IMR-90 (cell line): ENCODE measurements at regions of chr12 and their contacts with region 1.

Region 1: DNA sequence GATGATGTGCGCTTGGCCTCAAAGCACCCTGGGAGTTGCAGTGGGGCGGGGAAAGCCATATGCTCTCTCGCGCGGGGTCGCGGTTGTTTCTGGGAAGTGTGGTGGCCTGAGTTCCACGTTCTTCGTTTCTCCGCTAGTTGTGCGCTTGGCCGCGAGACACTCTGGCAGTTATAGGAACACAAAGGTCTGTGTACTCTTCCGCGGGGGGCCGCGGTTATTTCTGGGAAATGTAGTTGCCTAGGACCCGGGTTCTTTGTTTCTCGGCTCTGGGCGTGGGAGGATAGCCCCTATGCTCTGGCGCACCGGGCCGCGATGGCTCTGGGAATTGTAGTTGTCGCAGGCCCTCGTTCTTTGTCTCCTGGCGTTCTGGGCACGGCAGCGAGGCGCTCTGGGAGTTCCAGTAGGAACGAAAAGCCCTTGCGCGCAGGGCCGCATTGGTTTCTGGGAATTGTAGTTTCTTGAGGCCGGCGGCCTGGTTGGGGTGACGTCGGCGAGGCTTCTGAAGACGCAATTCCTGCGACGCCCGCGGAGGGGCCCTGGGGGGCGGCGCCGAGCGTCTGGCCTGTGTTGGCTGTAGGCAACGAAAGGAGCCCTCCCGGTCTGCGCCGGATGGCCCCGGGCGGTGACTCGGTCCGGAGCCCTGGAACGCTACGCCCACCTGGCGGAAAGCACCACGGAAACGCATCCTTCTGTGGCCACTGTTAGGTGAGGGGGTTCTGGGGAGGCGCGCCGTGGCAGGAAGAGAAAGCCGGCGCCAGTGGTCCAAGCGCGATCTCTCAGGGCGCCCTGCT is at the start of gene ZNF140:
- DNase-seq: peak; percentile 96
- ATAC-seq: peak; percentile 82
- H3K4me3 ChIP-seq: peak within 1 kb of the TSS; percentile 90
- H3K27ac ChIP-seq: peak within 1 kb of the TSS; percentile 86
- H3K4me1 ChIP-seq: no peaks in the 10 kb centered on the region; the same call in 1 of the 2 replicates
- H3K27me3 ChIP-seq: no peaks in the 10 kb centered on the region
- CTCF ChIP-seq: peak; percentile 26; the same call in 1 of the 2 replicates
- POLR2A ChIP-seq: peak; percentile 82
- RAD21 ChIP-seq: peak; percentile 25
- total RNA-seq, gene ZNF140: 20.8 and 25.8 TPM in 2 replicates

Region 2: GRCh38 chr12:132407451-132407961 is 673.1 kb before region 1 on chr12:
- CTCF ChIA-PET with region 1: no interaction called
- POLR2A ChIA-PET with region 1: no interaction called
- dilution Hi-C with region 1: no loop called
- in situ Hi-C with region 1: no loop called
- intact Hi-C with region 1: no loop called
- DNase-seq: no peak
- ATAC-seq: no peak
- H3K4me3 ChIP-seq: no peak overlapping the region
- H3K27ac ChIP-seq: no peak overlapping the region
- H3K4me1 ChIP-seq: no peaks in the 10 kb centered on the region
- H3K27me3 ChIP-seq: peaks cover 9% of the 10 kb centered on the region; the same call in 1 of the 2 replicates
- CTCF ChIP-seq: no peak
- POLR2A ChIP-seq: no peak
- RAD21 ChIP-seq: no peak

Region 3: DNA sequence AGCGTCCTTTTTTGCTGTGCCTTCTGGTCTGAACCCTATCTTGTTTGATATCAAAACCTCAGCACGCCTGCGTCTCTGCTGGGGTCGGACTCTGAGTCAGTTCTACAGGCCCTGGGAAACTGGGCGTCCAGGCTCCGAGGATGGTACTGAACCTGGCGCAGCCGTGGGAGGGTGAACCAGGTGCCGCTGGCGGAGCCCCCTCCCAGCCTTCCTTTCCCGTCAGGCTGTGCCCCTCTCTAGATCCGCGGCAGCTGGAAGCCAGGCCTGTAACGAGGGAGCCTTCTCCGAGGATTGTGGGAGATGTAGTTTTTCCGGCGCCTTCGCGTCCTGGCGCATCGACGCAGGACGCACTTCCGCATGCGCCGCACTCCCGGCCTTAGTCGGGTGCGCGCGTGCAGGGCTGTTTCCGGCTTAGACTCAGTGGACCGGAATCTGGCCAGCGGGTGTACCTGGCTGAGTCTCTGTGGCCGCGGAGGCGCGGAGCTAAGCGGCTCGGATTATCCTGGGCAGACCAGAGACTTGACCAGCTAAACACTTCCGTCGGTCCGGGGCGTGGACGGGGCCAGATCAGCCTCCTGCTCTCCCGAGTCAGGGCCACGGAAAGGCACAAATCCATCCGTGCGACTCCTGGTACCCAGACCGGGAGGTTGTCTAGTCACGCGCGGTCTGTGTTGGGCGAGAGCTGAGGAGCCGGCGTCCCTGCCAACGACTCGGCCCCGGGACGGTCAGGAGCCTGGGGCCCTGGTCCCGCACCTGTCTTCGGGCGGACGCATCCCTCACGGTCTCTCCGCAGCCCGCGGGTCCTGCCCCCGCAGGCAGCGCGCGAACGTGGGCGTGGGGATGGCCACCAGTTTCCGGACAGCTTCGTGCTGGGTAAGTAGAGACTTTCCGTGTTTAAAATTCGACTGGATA is 94.3 kb before region 1 on chr12 and contains the start of gene ZNF26:
- CTCF ChIA-PET with region 1: no interaction called
- POLR2A ChIA-PET with region 1: no interaction called
- dilution Hi-C with region 1: no loop called
- in situ Hi-C with region 1: no loop called
- intact Hi-C with region 1: loop called (anchors 1 kb)
- DNase-seq: peak; percentile 91
- ATAC-seq: peak; percentile 97
- H3K4me3 ChIP-seq: peak within 1 kb of the TSS; percentile 83
- H3K27ac ChIP-seq: peak within 1 kb of the TSS; percentile 89
- H3K4me1 ChIP-seq: no peaks in the 10 kb centered on the region
- H3K27me3 ChIP-seq: no peaks in the 10 kb centered on the region
- CTCF ChIP-seq: no peak
- POLR2A ChIP-seq: peak; percentile 74
- RAD21 ChIP-seq: no peak
- total RNA-seq, gene ZNF26: 11.8 and 12.2 TPM in 2 replicates

Region 4: DNA sequence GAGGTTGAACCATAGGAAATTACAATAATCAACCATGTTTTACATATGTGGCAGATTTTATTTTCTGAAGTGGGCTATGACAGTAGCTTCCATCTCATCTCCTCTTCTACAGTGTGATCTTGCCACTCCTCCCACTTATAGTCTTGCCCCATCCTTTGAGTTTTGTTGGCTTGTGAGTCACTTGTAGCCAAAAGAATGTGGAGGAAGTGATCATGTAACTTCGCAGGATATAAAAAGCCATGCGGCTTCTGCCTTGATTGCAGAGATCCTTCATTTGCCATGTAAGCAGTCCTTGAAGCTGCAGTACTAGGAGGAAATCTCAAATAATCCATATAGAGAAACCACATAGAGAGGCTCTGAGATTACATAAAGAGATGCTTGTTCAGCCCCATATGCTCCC is 57.0 kb before region 1 on chr12:
- CTCF ChIA-PET with region 1: no interaction called
- POLR2A ChIA-PET with region 1: no interaction called
- dilution Hi-C with region 1: no loop called
- in situ Hi-C with region 1: no loop called
- intact Hi-C with region 1: no loop called
- DNase-seq: peak; percentile 13
- ATAC-seq: no peak
- H3K4me3 ChIP-seq: no peak overlapping the region
- H3K27ac ChIP-seq: no peak overlapping the region
- H3K4me1 ChIP-seq: no peaks in the 10 kb centered on the region
- H3K27me3 ChIP-seq: no peaks in the 10 kb centered on the region
- CTCF ChIP-seq: no peak
- POLR2A ChIP-seq: no peak
- RAD21 ChIP-seq: no peak

Region 5: DNA sequence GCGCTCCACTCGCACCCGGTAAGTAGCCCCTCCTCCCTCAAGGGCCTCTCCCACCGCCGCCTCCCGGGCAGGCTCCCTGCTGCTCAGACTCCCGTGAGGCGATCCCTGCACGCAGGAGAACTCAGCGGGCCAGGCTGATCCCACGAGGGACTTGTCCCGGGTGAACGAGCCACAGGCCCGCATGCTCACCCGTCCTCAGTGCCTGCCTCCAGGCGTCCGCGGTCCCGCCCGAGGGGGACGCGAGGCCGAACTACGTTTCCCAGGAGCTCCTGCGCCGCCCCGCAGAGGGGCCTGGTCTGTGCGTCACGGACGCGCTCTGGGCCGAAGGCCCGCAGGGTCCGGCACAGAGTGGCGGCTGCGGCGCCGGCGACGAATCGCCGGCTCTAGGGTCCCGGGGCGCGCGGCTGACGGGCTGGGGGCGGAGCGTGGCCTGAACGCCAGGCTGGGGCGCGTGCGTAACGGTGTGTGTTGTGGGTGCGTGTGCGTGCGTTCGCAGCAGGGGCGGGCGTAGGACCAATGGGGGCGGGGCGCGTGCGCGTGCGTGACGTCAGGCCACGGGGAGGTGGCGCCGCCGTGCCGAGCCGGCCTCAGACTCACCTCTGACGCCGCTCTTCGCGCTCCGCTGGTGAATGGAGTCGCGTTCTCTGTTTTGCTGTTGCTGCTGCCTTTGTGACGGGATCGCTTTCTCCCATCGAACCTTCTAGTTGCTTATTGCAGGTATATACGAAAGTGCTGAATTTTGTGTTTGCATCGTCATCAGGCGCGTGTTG is 49.7 kb after region 1 on chr12 and contains the starts of genes ZNF10 and ZNF891:
- CTCF ChIA-PET with region 1: no interaction called
- POLR2A ChIA-PET with region 1: interaction called, 3 read pairs
- dilution Hi-C with region 1: no loop called
- in situ Hi-C with region 1: no loop called
- intact Hi-C with region 1: loop called (anchors 2 kb)
- DNase-seq: peak; percentile 96
- ATAC-seq: peak; percentile 96
- H3K4me3 ChIP-seq: peak within 1 kb of the TSS; percentile 98
- H3K27ac ChIP-seq: peak within 1 kb of the TSS; percentile 93
- H3K4me1 ChIP-seq: no peaks in the 10 kb centered on the region
- H3K27me3 ChIP-seq: no peaks in the 10 kb centered on the region
- CTCF ChIP-seq: no peak
- POLR2A ChIP-seq: peak; percentile 96
- RAD21 ChIP-seq: peak; percentile 1; the same call in 1 of the 2 replicates
- total RNA-seq, gene ZNF10: 5.3 and 6.1 TPM in 2 replicates
- total RNA-seq, gene ZNF891: 0.36 and 0.56 TPM in 2 replicates

Region 6: DNA sequence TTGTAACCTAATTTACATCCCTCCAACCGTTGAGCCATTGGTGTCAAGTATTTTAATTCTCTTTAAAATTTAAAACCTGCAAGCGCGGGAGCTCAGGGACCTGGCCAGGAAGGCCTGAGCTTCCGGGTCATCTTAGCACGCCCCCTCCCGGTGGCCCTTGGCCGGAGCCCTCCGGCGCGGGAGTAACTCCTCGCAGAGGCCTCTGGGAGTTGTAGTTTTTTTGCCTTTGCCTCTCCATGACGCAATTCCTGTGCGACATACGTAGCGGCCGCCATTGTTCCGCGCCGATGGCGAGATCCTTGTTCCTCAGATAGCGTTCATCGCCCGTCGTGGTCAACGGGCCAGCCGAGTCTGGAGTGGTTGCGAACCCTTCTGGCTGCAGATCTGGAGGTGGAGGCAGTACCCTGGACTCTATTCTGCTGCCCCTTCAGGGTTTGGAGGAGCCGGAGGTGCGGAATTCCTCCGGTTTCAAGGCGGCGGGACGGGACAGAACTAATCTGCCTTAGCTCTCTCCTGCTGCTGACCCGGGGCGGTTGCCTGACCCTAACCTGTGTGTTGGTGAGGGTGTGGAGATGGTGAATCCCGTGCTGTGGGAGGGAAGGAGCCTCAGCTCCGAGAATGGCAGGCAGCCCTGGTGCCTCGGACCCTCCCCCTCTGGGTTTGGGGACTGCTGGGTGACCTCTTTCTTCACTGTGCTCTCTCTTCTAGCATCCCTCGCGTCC is 100.8 kb after region 1 on chr12 and contains the start of gene ZNF268:
- CTCF ChIA-PET with region 1: interaction called, 3 read pairs
- POLR2A ChIA-PET with region 1: no interaction called
- dilution Hi-C with region 1: no loop called
- in situ Hi-C with region 1: no loop called
- intact Hi-C with region 1: loop called (anchors 1 kb)
- DNase-seq: peak; percentile 89
- ATAC-seq: peak; percentile 97
- H3K4me3 ChIP-seq: peak within 1 kb of the TSS; percentile 94
- H3K27ac ChIP-seq: peak within 1 kb of the TSS; percentile 75
- H3K4me1 ChIP-seq: no peaks in the 10 kb centered on the region
- H3K27me3 ChIP-seq: no peaks in the 10 kb centered on the region
- CTCF ChIP-seq: peak; percentile 88
- POLR2A ChIP-seq: peak; percentile 64; the same call in 1 of the 2 replicates
- RAD21 ChIP-seq: peak; percentile 48
- total RNA-seq, gene ZNF268: 31.1 and 54.5 TPM in 2 replicates